Dendritic cell treated with granulocyte-macrophage colony-stimulating factor and Interleukin-4, amounts not matched to agents 40 ng/mL and 50 ng/mL, for 4 days (primary cell): ENCODE measurements at regions of chr7 and their contacts with region 1.

Region 1: GRCh38 chr7:100132697-100133151 is 6.0 kb downstream of the MBLAC1 start:
- H3K4me3 Mint-ChIP-seq: no peak overlapping the region
- H3K27ac Mint-ChIP-seq: no peak overlapping the region
- H3K4me1 Mint-ChIP-seq: peaks cover 22% of the 10 kb centered on the region
- H3K27me3 Mint-ChIP-seq: peaks cover 28% of the 10 kb centered on the region

Region 2: DNA sequence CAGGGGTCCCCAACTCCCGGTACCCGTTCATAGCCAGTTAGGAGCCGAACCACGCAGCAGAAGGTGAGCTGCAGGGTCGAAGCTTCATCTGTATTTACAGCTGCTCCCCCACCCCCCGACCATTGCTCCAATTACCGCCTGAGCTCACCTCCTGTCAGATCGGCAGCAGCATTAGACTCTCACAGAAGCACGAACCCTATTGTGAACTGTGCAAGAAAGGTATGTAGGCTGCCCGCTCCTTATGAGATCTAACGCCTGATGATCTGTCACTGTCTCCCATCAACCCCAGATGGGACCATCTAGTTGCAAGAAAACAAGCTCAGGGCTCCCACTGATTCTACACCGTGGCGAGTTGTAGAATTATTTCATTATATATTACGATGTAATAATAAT is 142.3 kb before region 1 on chr7:
- intact Hi-C with region 1: loop called (anchors 1 kb)
- H3K4me3 Mint-ChIP-seq: no peak overlapping the region
- H3K27ac Mint-ChIP-seq: no peak overlapping the region
- H3K4me1 Mint-ChIP-seq: peaks cover 11% of the 10 kb centered on the region
- H3K27me3 Mint-ChIP-seq: peaks cover 19% of the 10 kb centered on the region

Region 3: DNA sequence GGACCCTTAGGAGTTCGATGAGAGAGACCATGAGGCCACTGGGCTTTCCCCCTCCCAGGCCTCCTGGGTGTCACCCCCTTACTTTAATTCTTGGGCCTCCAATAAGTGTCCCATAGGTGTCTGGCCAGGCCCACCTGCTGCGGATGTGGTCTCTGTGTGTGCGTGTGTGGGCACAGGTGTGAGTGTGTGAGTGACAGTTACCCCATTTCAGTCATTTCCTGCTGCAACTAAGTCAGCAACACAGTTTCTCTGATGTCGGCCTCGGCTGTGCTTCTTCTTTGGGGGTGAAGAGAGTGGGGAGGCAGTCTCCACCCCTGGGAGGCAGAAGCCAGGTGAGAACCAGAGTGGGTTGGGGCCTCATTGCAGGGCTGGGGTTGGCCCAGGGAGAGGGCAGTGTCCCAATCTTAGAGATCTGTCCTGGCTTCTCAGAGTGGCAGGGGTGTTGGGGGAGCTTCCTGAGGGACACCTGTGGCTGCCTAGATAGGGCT is 88.6 kb after region 1 on chr7:
- intact Hi-C with region 1: loop called (anchors 1 kb)
- H3K4me3 Mint-ChIP-seq: no peak overlapping the region
- H3K27ac Mint-ChIP-seq: no peak overlapping the region
- H3K4me1 Mint-ChIP-seq: peaks cover 18% of the 10 kb centered on the region
- H3K27me3 Mint-ChIP-seq: no peaks in the 10 kb centered on the region

Region 4: DNA sequence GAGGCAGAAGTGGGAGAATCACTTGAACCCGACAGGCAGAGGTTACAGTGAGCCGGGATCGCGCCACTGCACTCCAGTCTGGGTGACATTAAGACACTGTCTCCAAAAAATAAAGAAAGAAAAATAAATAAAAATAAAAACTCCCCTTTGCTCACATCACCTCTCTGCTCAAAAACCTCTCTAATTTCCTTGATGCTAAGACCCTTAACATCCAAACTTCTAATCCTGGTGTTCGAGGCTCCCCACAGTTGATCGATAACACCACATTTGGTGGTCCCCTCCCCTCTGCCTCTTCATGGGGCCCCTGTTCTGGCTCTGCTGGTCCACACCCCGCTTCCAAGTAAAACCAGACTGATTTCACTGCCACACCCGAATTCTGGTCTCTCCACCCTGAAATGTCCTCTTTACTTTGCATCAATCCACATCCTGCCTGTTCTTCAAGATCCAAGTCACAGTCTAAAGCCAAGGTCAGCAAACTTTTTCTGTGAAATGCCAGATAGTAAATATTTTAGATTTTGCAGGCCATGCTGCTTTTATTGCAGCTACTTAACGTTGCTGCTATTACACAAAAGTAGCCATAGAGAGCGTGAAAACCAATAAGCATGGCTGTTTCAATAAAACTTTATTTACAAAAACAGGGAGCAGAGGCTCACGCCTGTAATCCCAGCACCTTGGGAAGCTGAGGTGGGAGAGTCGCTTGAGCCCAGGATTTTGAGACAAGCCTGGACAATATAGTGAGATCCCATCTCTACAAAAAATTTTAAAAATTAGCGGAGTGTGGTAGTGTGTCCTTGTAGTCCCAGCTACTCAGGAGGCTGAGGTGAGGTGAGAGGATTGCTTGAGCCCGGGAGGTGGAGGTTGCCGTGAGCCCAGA is 491.5 kb after region 1 on chr7:
- intact Hi-C with region 1: no loop called
- H3K4me3 Mint-ChIP-seq: peak overlapping the region; percentile 7
- H3K27ac Mint-ChIP-seq: peak overlapping the region; percentile 34
- H3K4me1 Mint-ChIP-seq: peaks cover 33% of the 10 kb centered on the region
- H3K27me3 Mint-ChIP-seq: peaks cover 26% of the 10 kb centered on the region